Breast epithelium (tissue), 4 donors: ENCODE measurements at regions of chr16 and their contacts with region 1.

Region 1: DNA sequence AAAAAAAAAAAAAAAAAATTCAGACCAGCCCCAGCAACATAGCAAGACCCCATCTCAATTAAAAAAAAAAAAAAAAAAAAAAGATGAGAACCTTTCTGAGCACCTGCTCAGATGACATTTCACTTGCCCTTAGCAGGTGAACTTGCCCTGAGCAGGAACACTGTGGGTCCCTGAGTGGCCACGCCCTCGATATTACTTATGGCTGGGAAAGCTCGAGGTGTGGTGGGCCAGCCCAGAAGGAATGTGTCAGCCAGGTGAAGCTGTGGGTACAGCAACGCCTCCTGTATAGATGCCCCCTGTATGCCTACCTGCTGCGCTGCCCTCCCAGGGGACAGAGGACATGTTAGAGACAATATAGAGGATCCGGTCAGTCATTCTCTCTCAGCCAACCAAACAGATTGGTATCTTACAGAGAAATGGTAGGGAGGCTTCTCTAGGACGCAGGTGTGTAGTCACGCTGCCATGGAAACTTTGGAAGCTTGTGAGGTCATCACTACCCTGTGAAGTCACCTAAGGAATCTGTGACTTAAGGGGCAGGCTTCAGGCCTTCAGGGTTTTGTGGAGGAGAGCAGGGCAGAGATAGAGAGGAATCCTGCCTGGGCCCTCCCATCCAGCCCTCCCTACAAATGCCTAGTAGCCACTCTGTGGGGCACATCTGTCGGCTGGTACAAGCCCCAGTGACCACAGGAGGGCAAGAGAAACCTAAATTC is at the start of gene DPEP2NB:
- DNase-seq: no peak
- H3K4me3 ChIP-seq: no peak within 1 kb of the TSS
- H3K27ac ChIP-seq: no peak within 1 kb of the TSS
- H3K4me1 ChIP-seq: no peaks in the 10 kb centered on the region
- H3K27me3 ChIP-seq: no peaks in the 10 kb centered on the region
- CTCF ChIP-seq: no peak
- POLR2A ChIP-seq: no peak
- total RNA-seq, gene DPEP2NB: not detected

Region 2: GRCh38 chr16:68859827-68860226 is 844.3 kb after region 1 on chr16:
- intact Hi-C with region 1: loop called (anchors 5 kb)
- DNase-seq: no peak
- H3K4me3 ChIP-seq: no peak overlapping the region
- H3K27ac ChIP-seq: no peak overlapping the region
- H3K4me1 ChIP-seq: no peaks in the 10 kb centered on the region
- H3K27me3 ChIP-seq: no peaks in the 10 kb centered on the region
- CTCF ChIP-seq: no peak
- POLR2A ChIP-seq: no peak